Brain microvascular endothelial cell (primary cell): ENCODE measurements at regions of chr11 and their contacts with region 1.

Region 1: DNA sequence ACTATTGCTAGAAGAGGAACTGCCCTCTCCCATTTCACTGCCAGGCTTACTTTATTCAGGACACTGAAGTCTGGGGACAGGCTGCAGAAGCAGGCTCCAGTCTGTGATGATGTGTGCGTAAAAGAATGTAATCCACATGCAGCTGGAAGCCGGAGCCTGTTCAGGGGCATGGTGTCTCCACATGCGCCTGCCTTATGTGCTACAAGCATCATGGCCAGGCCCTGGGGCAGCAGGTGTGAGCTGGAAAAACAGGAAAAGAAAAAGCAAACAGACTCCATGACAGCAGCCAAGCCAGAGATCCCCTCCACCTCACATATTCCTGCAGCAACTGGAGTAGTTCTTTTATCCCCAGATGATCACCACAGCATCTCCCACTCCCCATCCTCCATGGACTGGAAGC is 33.4 kb downstream of the ARFGAP2 start:
- DNase-seq: peak; percentile 57
- H3K4me3 ChIP-seq: no peak overlapping the region
- H3K27ac ChIP-seq: no peak overlapping the region
- H3K27me3 ChIP-seq: no peaks in the 10 kb centered on the region
- CTCF ChIP-seq: no peak

Region 2: DNA sequence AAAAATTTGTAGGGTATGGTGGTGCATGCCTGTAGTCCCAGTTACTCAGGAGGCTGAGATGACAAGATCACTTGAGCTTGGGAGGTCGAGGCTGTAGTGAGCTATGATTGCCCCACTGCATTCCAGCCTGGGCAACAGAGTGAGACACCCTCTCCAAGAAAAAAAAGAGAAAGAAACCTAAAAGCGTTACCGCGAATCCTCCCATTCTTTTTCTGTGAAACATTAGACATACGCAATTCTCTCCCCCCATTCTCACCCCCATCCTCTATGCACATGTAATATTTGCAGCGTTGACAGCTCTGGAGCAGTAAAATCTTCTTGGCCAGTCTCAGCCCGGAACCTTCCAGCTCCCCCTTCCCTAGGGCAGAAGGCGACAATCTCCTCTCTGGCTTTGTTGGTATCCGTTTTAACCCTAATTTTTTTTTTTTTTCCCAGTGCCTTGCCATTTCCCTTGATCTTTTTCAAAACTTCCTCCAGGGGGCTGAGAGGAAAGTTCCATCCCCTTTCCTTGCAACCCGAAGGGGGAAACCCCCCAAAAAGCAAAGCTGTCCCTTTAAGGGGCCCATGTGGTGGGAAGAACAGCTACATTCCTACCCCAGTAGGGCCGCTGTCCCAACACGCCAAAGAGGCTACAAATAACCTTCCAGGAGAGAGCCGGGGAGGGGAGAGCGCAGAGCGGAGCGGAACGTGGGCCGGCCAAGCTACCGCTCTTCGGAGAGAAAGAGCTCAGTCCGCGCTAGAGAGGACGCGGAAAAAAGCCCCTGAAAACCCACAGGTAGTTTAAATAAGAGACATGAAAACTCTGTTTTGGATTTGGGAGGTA is 226.8 kb before region 1 on chr11:
- in situ Hi-C with region 1: loop called (anchors 25 kb)
- DNase-seq: peak; percentile 45
- H3K4me3 ChIP-seq: peak overlapping the region; percentile 66
- H3K27ac ChIP-seq: no peak overlapping the region
- H3K27me3 ChIP-seq: no peaks in the 10 kb centered on the region
- CTCF ChIP-seq: peak; percentile 58